H1 (cell line): ENCODE measurements at regions of chr4 and their contacts with region 1.

Region 1: DNA sequence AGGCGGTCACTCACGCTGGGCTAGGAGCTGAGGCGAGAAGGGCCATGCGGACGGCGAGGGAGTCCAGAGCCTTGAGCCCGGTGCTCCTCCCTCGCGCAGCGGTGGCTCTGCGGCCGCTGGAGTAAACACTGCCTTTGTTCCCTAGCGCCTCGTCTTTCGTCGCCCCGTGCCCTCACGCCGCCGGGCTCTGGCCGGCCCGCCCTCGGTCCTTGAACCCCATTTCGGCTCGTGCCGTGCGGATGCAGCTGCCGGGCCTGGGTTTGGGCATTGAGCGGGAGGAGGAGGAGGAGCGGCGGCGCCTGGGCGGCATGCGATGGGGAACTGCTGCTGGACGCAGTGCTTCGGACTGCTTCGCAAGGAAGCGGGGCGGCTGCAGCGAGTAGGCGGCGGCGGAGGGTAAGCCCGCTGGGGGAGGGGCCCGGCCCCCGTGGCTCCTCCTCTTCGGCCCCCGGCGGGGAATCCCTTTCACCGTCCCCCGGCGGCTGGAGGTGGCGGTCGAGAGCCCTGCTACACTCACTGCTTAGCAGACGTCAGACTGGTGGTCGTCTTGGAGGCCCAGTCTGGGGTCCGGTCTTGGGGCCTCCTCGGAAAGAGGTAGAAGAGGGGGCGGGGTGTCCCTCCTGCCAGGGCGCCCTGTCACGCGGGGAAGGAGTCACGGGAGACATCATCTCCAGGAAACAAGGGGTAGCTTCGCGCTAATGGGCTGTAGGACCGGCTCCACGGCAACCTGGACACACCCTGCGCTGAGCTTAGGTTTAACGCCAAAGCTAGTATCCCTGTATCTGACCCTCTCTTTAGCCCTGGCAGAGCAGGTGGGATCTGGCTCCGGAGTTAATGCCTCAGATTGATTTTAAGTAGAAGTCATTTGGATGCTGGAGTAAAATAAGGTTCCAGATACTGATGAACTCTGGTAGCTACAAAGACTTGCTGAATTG is at the start of gene AP1AR:
- DNase-seq: peak in 1 of 2 experiments; percentile 93
- H3K4me3 ChIP-seq: peak within 1 kb of the TSS; percentile 72 to 97 (median 90)
- H3K27ac ChIP-seq: peak within 1 kb of the TSS; percentile 98
- H3K4me1 ChIP-seq: peaks cover 0 to 6% (median 0%) of the 10 kb centered on the region in 4 experiments; a peak in 2 of 7 replicates
- H3K27me3 ChIP-seq: no peaks in the 10 kb centered on the region
- CTCF ChIP-seq: peak; percentile 41 to 63 (median 41); a peak in 3 of 4 replicates
- EP300 ChIP-seq: peak in 1 of 2 experiments; percentile 1; a peak in 1 of 3 replicates
- POLR2A ChIP-seq: peak; percentile 97 to 99
- RAD21 ChIP-seq: peak; percentile 15 to 29; a peak in 3 of 4 replicates
- total RNA-seq, gene AP1AR: 26.9 and 27.7 TPM in 2 replicates

Region 2: DNA sequence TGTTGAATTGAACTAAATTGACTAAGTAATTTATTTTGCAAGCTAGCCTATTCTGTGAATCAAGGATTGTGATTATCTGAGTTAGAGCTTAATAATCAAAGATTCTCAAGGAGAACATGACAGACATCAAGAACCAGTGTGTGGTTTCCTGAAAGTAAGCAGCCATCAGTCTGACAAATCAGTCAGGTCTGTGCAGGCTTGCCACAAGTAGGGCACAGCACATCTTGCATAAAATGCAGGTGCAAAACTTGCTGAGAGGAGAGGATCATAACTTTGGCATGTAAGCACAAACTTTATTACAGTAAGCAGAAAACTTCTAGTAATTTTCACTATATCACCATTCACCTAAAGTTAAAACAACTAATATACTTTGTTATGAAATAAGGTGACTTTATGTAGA is 64.3 kb before region 1 on chr4:
- CTCF ChIA-PET with region 1: no interaction called
- POLR2A ChIA-PET with region 1: no interaction called
- DNase-seq: no peak
- H3K4me3 ChIP-seq: no peak overlapping the region
- H3K27ac ChIP-seq: no peak overlapping the region
- H3K4me1 ChIP-seq: no peaks in the 10 kb centered on the region
- H3K27me3 ChIP-seq: no peaks in the 10 kb centered on the region
- CTCF ChIP-seq: no peak
- EP300 ChIP-seq: no peak
- POLR2A ChIP-seq: no peak
- RAD21 ChIP-seq: no peak

Region 3: DNA sequence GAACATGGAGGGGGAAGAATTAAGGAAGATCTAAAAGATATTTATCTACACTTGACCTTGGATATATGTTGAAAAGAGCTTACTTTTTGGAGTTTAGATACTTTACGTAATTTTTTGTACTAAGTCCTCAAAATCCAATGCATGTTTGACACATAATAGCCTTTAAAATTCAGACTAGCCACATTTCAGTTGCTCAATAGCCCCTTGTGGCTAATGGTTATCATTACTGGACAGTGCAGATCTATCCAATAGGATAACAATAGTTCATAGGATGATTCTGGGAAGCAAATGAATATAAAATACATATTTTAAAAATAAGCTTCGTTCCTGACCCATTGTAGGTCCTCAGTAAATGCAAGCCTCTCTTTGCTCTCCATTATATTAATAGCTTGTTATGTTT is 13.3 kb after region 1 on chr4:
- CTCF ChIA-PET with region 1: interaction called, 17 read pairs
- POLR2A ChIA-PET with region 1: interaction called, 13 read pairs
- DNase-seq: no peak
- H3K4me3 ChIP-seq: no peak overlapping the region
- H3K27ac ChIP-seq: no peak overlapping the region
- H3K4me1 ChIP-seq: peaks cover 0 to 6% (median 0%) of the 10 kb centered on the region in 4 experiments; a peak in 2 of 7 replicates
- H3K27me3 ChIP-seq: no peaks in the 10 kb centered on the region
- CTCF ChIP-seq: no peak
- EP300 ChIP-seq: no peak
- POLR2A ChIP-seq: no peak
- RAD21 ChIP-seq: no peak

Region 4: GRCh38 chr4:112448306-112449132 is 216.5 kb after region 1 on chr4:
- CTCF ChIA-PET with region 1: no interaction called
- POLR2A ChIA-PET with region 1: no interaction called
- DNase-seq: no peak
- H3K4me3 ChIP-seq: no peak overlapping the region
- H3K27ac ChIP-seq: no peak overlapping the region
- H3K4me1 ChIP-seq: peaks cover 0 to 12% (median 3%) of the 10 kb centered on the region in 4 experiments; a peak in 4 of 7 replicates
- H3K27me3 ChIP-seq: no peaks in the 10 kb centered on the region
- CTCF ChIP-seq: no peak
- EP300 ChIP-seq: no peak
- POLR2A ChIP-seq: no peak
- RAD21 ChIP-seq: no peak